Right ventricle myocardium inferior (tissue), 1 donor: ENCODE measurements at regions of chr7 and their contacts with region 1.

Region 1: DNA sequence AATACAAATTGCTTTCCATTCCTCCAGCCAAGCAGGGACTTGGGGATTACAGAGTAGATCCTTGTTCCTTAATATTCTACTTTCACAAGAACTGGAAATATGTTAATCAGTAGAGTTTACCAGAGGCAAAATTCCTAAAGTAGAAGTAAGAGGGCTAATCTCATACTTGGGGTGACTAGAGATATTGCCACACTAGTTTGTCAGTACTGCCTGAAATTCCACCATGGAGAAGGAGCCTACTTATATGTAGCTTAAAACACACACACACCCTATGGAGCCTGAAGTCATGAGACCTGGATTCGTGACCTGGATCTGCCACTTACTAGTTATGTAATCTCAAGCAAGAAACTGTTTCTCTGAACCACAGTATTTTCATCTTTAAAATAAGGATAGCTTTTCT is 33.9 kb downstream of the STRIP2 start:
- DNase-seq: no peak
- ATAC-seq: no peak

Region 2: GRCh38 chr7:129327076-129327475 is 141.0 kb before region 1 on chr7:
- intact Hi-C with region 1: no loop called
- DNase-seq: no peak
- ATAC-seq: no peak

Region 3: GRCh38 chr7:129367700-129368388 is 100.2 kb before region 1 on chr7:
- intact Hi-C with region 1: loop called (anchors 1 kb)
- DNase-seq: peak; percentile 86
- ATAC-seq: peak; percentile 84

Region 4: GRCh38 chr7:129433847-129434674 is 34.0 kb before region 1 on chr7 and contains the start of gene STRIP2:
- intact Hi-C with region 1: loop called (anchors 5 kb)
- DNase-seq: peak; percentile 97
- ATAC-seq: peak; percentile 98
- total RNA-seq, gene STRIP2: 22.0 TPM